CD8-positive, alpha-beta T cell (primary cell): ENCODE measurements at regions of chr15 and their contacts with region 1.

Region 1: DNA sequence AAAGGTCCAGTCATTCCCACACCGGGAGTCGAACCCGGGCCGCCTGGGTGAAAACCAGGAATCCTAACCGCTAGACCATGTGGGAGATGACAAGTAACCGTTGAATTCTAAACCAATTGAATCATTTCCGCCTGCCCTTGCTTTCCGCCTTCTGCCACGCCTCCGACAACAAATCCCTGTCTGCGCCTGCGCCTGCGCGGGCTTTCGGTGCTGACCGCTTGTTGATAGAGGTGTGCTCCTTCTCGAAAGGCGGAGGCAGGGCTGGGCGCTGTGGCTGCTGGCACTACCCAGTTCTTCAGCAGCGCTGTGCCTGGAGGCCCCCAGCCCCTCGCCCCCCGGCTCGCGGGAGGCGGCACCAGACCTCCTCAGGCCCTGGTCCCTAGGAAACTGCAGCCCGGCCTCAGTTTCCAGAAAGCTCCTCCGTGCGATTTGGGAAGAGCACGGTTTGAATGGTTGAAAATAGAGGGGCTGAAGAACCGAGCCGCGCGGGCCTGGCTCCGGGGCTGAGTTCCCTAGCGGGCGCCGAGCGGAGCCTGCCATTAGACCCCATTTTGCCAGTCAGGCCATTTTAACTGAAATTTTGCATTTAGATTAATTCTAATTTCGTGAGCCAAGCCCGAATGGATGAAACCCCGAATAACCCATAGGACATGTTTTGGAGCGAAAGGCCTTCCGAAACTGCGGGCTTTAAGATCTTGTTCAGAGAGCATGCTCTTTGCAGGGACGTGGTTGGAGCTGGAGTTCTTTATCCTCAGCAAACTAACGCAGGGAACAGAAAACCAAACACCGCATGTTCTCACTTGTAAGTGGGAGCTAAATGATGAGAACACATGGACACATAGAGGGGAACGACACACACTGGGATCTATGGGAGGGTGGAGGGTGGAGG is 219.3 kb upstream of the ATP10A start:
- DNase-seq: peak; percentile 86 to 96 (median 94)
- ATAC-seq: peak; percentile 96
- H3K4me3 ChIP-seq: peak overlapping the region; percentile 74 to 81
- H3K4me3 Mint-ChIP-seq: peak overlapping the region; percentile 91
- H3K27ac ChIP-seq: peak overlapping the region; percentile 70 to 71
- H3K27ac Mint-ChIP-seq: peak overlapping the region; percentile 94
- H3K4me1 ChIP-seq: peaks cover 14% of the 10 kb centered on the region
- H3K4me1 Mint-ChIP-seq: peaks cover 48% of the 10 kb centered on the region
- H3K27me3 ChIP-seq: no peaks in the 10 kb centered on the region
- H3K27me3 Mint-ChIP-seq: peaks cover under 1% of the 10 kb centered on the region
- CTCF ChIP-seq: no peak

Region 2: DNA sequence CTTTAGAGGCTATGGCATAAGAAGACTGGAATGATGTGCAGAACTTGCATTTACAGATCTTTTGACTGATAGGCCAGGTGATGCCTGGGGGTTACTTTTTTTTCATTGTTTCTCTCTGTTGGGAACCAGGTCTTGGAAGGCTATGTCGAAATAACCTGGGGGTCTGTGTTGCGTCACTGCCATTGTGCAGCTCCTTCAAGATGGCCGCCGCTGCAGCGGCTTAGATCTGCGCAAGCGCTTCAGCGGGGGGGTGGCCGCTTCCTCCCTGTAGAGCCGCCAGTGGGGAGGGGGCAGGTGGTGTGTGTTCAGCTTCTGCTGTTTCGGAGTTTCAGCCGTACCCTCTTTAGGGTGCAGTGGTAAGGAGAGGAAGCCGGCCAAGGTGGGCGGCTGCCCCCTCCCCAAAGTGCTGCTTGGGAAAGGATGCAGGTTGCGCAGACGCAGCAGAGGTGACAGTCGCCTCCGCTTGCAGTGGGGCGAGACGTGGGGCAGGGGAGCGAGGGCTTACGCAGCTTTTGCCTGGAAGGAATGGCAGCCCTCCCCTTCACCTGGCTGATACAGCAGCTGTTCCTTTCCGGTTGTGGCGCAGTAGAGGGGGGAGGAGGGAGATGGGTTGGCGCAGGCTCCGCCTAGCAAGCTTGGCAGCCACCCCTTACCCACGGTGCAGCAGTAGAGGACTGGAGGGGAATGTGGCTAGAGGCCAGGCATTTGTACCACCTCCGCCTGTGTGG is 1126.2 kb before region 1 on chr15:
- CTCF ChIA-PET with region 1: no interaction called
- POLR2A ChIA-PET with region 1: no interaction called
- intact Hi-C with region 1: loop called (anchors 10 kb)
- DNase-seq: peak; percentile 52 to 87 (median 77)
- ATAC-seq: peak; percentile 80
- H3K4me3 ChIP-seq: peak overlapping the region; percentile 81 to 85
- H3K4me3 Mint-ChIP-seq: peak overlapping the region; percentile 94
- H3K27ac ChIP-seq: peak overlapping the region; percentile 89 to 90
- H3K27ac Mint-ChIP-seq: peak overlapping the region; percentile 96
- H3K4me1 ChIP-seq: peaks cover 14% of the 10 kb centered on the region
- H3K4me1 Mint-ChIP-seq: peaks cover 28% of the 10 kb centered on the region
- H3K27me3 ChIP-seq: no peaks in the 10 kb centered on the region
- H3K27me3 Mint-ChIP-seq: no peaks in the 10 kb centered on the region
- CTCF ChIP-seq: no peak

Region 3: DNA sequence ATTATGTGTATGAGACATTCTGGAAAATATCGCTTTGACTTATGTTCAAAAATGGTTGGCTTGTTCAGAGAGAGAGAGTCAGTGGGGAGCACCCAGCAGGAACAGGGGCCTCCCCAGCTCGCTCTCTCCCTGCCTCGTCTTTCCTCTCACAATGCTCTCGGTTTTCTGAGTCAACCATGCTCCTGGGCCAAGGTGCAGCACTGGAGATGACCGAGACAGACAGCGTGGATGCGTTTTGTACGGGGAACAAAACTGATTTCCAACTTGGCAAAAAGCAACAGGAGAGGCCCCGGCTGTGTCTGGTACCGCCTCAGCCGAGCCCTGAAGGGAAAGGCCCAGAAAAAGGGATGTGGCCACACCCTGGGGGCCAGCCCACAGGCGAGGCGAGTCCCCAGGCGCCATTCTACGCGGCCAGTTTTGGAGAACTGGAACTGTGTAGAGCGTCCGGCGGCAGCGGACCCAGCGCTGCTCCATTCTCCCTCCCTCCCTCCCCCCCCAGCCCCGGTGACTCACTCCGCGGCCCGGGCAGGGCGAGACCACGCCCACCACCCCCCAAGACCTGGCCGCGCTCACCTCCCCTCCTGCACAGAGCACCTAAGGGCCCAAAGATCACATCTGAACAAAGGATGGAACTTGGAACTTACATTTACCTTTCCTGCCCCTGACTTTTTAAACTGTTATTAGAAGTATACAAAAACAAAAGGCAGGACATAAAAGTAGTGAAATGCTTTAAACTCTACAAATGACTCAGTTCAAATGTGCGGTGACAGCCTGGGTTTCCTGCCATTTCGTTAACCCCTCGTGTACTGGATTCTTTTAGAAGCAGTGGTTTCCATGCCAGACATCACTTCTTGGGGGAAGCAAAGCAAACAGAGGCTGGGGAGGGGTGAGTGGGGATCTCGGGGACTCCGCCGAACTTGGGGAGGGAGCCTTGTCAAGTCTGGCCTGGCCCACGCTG is 232.0 kb before region 1 on chr15:
- CTCF ChIA-PET with region 1: no interaction called
- POLR2A ChIA-PET with region 1: no interaction called
- intact Hi-C with region 1: loop called (anchors 1 to 5 kb)
- DNase-seq: peak in 8 of 9 experiments; percentile 63 to 86 (median 74)
- ATAC-seq: peak; percentile 54
- H3K4me3 ChIP-seq: peak overlapping the region; percentile 45 to 53
- H3K4me3 Mint-ChIP-seq: peak overlapping the region; percentile 91
- H3K27ac ChIP-seq: peak overlapping the region; percentile 72 to 88
- H3K27ac Mint-ChIP-seq: peak overlapping the region; percentile 98
- H3K4me1 ChIP-seq: peaks cover 80% of the 10 kb centered on the region
- H3K4me1 Mint-ChIP-seq: peaks cover 86% of the 10 kb centered on the region
- H3K27me3 ChIP-seq: no peaks in the 10 kb centered on the region
- H3K27me3 Mint-ChIP-seq: no peaks in the 10 kb centered on the region
- CTCF ChIP-seq: no peak

Region 4: DNA sequence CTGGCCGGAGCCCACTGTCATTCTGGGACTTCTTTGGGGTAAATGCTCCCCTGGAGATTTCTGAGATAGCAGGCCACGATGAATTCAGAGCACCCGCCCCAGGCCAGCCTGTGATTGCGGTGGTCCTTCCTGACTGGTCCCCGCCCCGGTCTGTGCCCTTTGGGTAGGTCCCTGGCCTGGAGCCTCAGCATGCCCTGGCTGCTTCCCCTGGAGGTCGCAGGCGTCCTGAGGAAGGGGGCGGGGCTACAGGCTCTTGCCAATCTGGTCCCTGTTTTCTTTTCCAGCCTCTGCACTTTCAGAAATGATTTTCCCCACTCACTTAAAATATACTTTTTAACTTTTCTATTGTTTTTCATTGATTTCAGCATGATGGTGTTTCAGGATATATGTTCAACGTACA is 30.8 kb after region 1 on chr15:
- CTCF ChIA-PET with region 1: no interaction called
- POLR2A ChIA-PET with region 1: no interaction called
- intact Hi-C with region 1: no loop called
- DNase-seq: no peak
- ATAC-seq: no peak
- H3K4me3 ChIP-seq: no peak overlapping the region
- H3K4me3 Mint-ChIP-seq: no peak overlapping the region
- H3K27ac ChIP-seq: no peak overlapping the region
- H3K27ac Mint-ChIP-seq: no peak overlapping the region
- H3K4me1 ChIP-seq: no peaks in the 10 kb centered on the region
- H3K4me1 Mint-ChIP-seq: no peaks in the 10 kb centered on the region
- H3K27me3 ChIP-seq: no peaks in the 10 kb centered on the region
- H3K27me3 Mint-ChIP-seq: no peaks in the 10 kb centered on the region
- CTCF ChIP-seq: no peak